ENCODE measurements at regions of chr3 and their contacts with region 1.

Region 1: GRCh38 chr3:49673715-49674496 is at the start of gene APEH:
- DNase-seq: peak; percentile 99
- ATAC-seq: peak; percentile 96
- total RNA-seq, gene APEH: 99.5 TPM

Region 2: GRCh38 chr3:48855681-48856447 is 818.0 kb before region 1 on chr3:
- intact Hi-C with region 1: no loop called
- DNase-seq: no peak
- ATAC-seq: no peak

Region 3: GRCh38 chr3:49539659-49540560 is 134.0 kb before region 1 on chr3:
- intact Hi-C with region 1: loop called (anchors 1 kb)
- DNase-seq: peak; percentile 98
- ATAC-seq: peak; percentile 99

Region 4: DNA sequence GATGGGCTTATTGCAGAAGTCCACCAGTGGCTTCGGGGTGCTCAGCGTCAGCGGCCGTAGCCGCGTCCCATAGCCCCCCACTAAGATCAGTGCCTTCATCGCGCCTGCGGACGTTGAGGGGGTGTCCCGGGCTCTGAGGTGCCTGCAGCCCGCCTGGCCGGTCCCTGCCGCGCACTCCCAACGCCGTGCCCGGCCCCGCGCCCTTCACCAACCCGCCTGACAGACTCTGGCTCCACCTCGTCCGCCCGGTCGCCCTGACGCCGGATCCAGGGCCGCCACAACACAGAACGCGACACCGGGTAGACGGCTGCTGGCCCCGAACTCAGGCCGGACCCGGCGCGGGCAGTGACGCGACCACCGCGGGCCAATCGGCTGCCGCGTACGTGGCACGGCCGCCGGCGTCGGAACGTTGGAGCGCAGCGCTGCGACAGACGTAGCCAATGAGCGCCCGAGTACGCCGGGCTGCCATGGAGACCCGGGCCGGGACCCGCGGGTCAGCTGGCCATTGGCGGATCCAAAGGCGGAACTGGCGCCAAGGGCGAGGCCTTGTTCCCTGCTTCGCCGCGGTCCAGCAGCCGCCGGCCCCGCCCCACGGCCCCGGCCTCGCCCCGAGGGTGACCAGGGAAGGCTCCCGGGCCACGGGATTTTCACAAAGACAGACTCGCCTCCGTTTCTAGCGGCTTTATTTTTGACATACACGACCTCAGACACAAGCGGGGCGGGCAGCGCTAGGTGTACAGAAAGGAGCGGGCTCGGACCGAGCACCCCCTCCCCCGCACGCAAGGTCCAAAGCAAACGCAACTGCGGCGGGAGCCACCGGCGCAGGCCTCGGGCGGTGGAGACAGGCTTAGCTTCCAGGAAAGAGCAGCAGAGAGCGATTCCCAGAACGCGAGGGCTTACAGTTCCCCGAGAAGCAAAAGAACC is 50.0 kb after region 1 on chr3 and contains the start of gene GMPPB:
- intact Hi-C with region 1: no loop called
- DNase-seq: peak; percentile 99
- ATAC-seq: peak; percentile 92
- total RNA-seq, gene GMPPB: 18.1 TPM

Region 5: DNA sequence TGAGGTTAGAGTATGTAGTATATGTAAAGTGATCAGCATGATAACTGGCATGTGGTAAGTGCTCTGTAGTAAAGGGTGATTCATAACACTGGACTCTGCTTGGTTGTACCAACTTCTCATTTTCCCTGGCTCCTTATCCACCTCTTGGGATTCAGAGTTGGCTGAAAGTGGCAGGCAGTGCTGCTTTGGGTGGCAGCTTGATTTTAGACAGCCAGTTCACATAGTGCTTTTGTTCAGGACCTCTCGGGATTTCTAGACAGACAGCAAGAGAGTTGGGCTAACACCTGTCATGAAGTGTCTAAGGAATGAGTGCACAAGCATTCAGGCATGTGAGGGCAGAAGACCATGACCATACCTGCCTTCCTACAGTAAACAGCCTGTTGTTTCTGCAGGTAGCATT is 335.0 kb after region 1 on chr3:
- intact Hi-C with region 1: no loop called
- DNase-seq: no peak
- ATAC-seq: no peak

Measured in Right ventricle myocardium inferior (tissue), 1 donor.